Calu3 (cell line): ENCODE measurements at regions of chr16 and their contacts with region 1.

Region 1: GRCh38 chr16:55543472-55543871 is 23.0 kb upstream of the CAPNS2 start:
- DNase-seq: no peak
- H3K4me3 Mint-ChIP-seq: no peak overlapping the region
- H3K27ac Mint-ChIP-seq: no peak overlapping the region
- H3K4me1 Mint-ChIP-seq: no peaks in the 10 kb centered on the region
- H3K27me3 Mint-ChIP-seq: no peaks in the 10 kb centered on the region
- CTCF ChIP-seq: peak; percentile 18

Region 2: DNA sequence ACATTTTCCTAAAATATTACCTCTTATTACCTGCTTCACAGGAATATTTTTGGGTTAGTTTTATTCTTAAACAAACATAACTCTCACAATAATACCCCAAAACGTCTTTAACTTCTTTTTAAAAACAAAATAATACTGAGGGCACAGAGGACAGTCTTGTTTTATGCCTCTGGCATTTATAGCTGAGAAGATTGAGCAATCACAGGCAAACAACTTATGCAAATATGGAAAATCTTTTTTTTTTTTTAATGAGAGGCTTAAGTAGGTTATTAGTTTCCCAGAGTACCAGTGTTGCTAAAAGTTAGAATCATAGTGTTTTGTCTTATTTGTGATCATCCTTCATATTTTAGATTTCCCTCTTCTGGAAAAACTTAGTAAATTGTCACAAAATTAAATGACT is 1644.5 kb before region 1 on chr16:
- CTCF ChIA-PET with region 1: no interaction called
- intact Hi-C with region 1: loop called (anchors 5 kb)
- DNase-seq: no peak
- H3K4me3 Mint-ChIP-seq: no peak overlapping the region
- H3K27ac Mint-ChIP-seq: no peak overlapping the region
- H3K4me1 Mint-ChIP-seq: peaks cover 5% of the 10 kb centered on the region
- H3K27me3 Mint-ChIP-seq: no peaks in the 10 kb centered on the region
- CTCF ChIP-seq: no peak

Region 3: GRCh38 chr16:55465077-55465896 is 78.2 kb before region 1 on chr16:
- CTCF ChIA-PET with region 1: interaction called, 13 read pairs
- intact Hi-C with region 1: loop called (anchors 1 kb)
- DNase-seq: peak; percentile 90
- H3K4me3 Mint-ChIP-seq: no peak overlapping the region
- H3K27ac Mint-ChIP-seq: no peak overlapping the region
- H3K4me1 Mint-ChIP-seq: no peaks in the 10 kb centered on the region
- H3K27me3 Mint-ChIP-seq: peaks cover 41% of the 10 kb centered on the region
- CTCF ChIP-seq: peak; percentile 100

Region 4: GRCh38 chr16:55494994-55495421 is 48.5 kb before region 1 on chr16:
- CTCF ChIA-PET with region 1: interaction called, 3 read pairs
- intact Hi-C with region 1: loop called (anchors 1 kb)
- DNase-seq: peak; percentile 24
- H3K4me3 Mint-ChIP-seq: no peak overlapping the region
- H3K27ac Mint-ChIP-seq: no peak overlapping the region
- H3K4me1 Mint-ChIP-seq: peaks cover 7% of the 10 kb centered on the region
- H3K27me3 Mint-ChIP-seq: peaks cover 22% of the 10 kb centered on the region
- CTCF ChIP-seq: no peak

Region 5: GRCh38 chr16:55506083-55506482 is 37.4 kb before region 1 on chr16:
- CTCF ChIA-PET with region 1: no interaction called
- intact Hi-C with region 1: no loop called
- DNase-seq: no peak
- H3K4me3 Mint-ChIP-seq: no peak overlapping the region
- H3K27ac Mint-ChIP-seq: no peak overlapping the region
- H3K4me1 Mint-ChIP-seq: peaks cover 33% of the 10 kb centered on the region
- H3K27me3 Mint-ChIP-seq: peaks cover 29% of the 10 kb centered on the region
- CTCF ChIP-seq: no peak